Gastrocnemius medialis (tissue), 4 donors: ENCODE measurements at regions of chr22 and their contacts with region 1.

Region 1: GRCh38 chr22:49789289-49790141 is 38.2 kb downstream of the BRD1 start:
- DNase-seq: peak in 1 of 2 donors; percentile 50
- ATAC-seq: no peak
- H3K4me3 ChIP-seq: peak overlapping the region in 3 of 4 donors; percentile 3 to 24 (median 21)
- H3K27ac ChIP-seq: peak overlapping the region; percentile 69 to 83 (median 79)
- H3K4me1 ChIP-seq: peaks cover 76 to 83% of the 10 kb centered on the region in 2 donors
- H3K27me3 ChIP-seq: no peaks in the 10 kb centered on the region
- CTCF ChIP-seq: no peak
- POLR2A ChIP-seq: no peak

Region 2: DNA sequence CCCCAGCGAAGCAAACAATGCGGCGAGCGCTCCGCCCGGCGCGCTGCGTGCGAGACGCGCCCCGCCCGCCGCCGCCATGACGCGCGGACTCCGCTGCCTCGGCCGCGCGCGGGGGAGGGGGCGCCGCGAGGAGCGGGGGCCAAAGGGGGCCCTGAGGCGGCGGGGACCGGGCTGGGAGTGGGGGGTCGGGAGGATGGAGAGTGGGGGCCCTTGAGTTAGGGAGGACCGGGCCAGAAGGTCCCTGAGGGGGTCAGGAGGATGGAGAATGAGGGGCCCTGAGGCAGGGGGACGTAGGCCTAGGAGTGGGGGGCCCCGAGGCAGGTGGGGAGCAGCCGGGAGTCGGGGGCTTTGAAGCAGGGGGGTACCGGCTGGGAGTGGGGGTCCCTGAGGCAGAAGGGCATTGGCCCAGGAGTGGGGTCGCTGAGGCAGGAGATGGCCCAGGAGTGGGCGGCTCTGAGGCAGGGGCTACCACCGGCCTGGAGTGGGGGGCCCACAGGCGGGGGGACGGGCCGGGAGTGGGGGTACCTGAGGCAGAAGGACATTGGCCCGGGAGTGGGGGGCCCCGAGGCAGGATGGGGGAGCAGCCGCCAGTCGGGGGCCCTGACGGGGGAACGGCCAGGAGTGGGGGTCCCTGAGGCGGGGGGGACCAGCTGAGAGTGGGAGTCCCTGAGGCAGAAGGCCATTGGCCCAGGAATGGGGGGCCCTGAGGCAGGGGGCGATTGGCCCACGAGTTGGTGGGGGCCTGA is 38.5 kb after region 1 on chr22 and contains the start of gene BRD1:
- in situ Hi-C with region 1: no loop called
- intact Hi-C with region 1: loop called (anchors 5 kb)
- DNase-seq: peak in 1 of 2 donors; percentile 42
- ATAC-seq: peak; percentile 68 to 69
- H3K4me3 ChIP-seq: peak within 1 kb of the TSS; percentile 62 to 70 (median 65)
- H3K27ac ChIP-seq: peak within 1 kb of the TSS; percentile 75 to 90 (median 82)
- H3K4me1 ChIP-seq: peaks cover 19 to 27% of the 10 kb centered on the region in 2 donors
- H3K27me3 ChIP-seq: no peaks in the 10 kb centered on the region
- CTCF ChIP-seq: no peak
- POLR2A ChIP-seq: peak; percentile 20 to 21
- total RNA-seq, gene BRD1: 15.6 to 25.2 (median 18.1) TPM

Region 3: DNA sequence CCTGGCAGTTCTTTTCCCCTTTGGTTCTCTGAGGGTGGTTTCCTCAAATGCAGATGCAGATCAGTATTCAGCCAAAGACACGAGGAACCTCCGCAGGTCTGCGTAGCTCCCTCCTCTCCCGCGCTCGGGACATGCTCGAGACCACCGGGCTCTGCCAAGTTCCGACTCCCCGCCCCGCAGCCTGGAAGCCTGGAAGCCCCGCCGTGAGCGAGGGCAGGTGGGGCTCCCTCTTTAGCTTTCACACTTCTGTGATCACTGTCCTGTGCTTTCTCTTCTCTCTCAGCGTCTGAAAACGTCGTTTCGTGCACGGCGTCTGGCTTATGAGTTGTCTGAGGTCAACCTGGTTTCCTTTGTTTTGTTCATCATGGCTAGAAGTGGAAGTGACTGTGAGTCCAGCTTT is 90.8 kb after region 1 on chr22:
- in situ Hi-C with region 1: loop called in 1 of 4 experiments (anchors 25 kb)
- intact Hi-C with region 1: no loop called
- DNase-seq: no peak
- ATAC-seq: no peak
- H3K4me3 ChIP-seq: no peak overlapping the region
- H3K27ac ChIP-seq: no peak overlapping the region
- H3K4me1 ChIP-seq: no peaks in the 10 kb centered on the region
- H3K27me3 ChIP-seq: no peaks in the 10 kb centered on the region
- CTCF ChIP-seq: no peak
- POLR2A ChIP-seq: no peak

Region 4: DNA sequence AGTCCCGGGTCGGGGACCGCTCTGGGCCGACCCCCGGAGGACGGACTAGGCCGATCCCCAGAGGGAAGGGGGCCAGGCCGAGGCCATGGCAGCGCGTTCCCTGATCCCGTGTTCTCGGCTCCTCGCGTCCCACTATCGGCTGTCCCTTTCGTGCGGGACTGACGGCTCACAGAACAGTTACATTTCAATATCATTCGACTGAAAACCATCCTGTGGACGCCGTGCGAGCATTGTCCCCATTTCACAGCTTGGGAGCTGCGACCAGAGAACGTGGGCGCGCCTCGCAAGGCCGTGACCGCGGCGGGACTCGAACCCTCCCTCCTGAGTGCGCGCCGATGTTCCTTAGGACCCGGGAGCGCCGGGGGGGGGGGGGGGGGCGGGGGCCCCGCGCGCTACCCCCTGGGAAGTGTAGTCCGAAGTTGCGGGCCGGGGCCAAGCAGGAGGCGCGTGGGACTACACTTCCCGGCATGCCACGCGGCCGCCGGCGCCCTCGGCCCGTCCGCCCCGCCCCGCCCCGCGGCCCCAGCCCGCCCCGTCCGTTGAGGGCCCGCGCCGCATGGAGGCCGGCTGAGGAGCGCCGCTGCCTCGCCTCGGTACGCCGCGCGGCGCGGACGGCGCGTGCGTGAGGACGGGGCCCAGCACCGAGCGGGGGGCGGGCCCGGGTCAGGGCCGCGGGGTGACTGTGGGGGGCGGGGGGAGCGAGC is 396.0 kb after region 1 on chr22 and contains the start of gene TRABD:
- in situ Hi-C with region 1: no loop called
- intact Hi-C with region 1: loop called (anchors 10 kb)
- DNase-seq: peak; percentile 81 to 84
- ATAC-seq: peak; percentile 80 to 82
- H3K4me3 ChIP-seq: peak within 1 kb of the TSS; percentile 71 to 87 (median 78)
- H3K27ac ChIP-seq: peak within 1 kb of the TSS; percentile 62 to 74 (median 70)
- H3K4me1 ChIP-seq: peaks cover 20 to 23% of the 10 kb centered on the region in 2 donors
- H3K27me3 ChIP-seq: no peaks in the 10 kb centered on the region
- CTCF ChIP-seq: no peak
- POLR2A ChIP-seq: no peak
- total RNA-seq, gene TRABD: 21.4 to 30.3 (median 24.5) TPM